AG04450 (cell line): ENCODE measurements at regions of chr5 and their contacts with region 1.

Region 1: GRCh38 chr5:179265514-179266290 is 79.6 kb downstream of the ADAMTS2 start:
- DNase-seq: peak; percentile 96
- H3K4me3 ChIP-seq: peak overlapping the region; percentile 32
- H3K27ac ChIP-seq: peak overlapping the region; percentile 99
- H3K27me3 ChIP-seq: no peaks in the 10 kb centered on the region
- CTCF ChIP-seq: no peak

Region 2: GRCh38 chr5:179275941-179276837 is 10.5 kb after region 1 on chr5:
- CTCF ChIA-PET with region 1: interaction called, 3 read pairs
- POLR2A ChIA-PET with region 1: interaction called, 15 read pairs
- DNase-seq: peak; percentile 93
- H3K4me3 ChIP-seq: no peak overlapping the region
- H3K27ac ChIP-seq: peak overlapping the region; percentile 95
- H3K27me3 ChIP-seq: no peaks in the 10 kb centered on the region
- CTCF ChIP-seq: no peak

Region 3: DNA sequence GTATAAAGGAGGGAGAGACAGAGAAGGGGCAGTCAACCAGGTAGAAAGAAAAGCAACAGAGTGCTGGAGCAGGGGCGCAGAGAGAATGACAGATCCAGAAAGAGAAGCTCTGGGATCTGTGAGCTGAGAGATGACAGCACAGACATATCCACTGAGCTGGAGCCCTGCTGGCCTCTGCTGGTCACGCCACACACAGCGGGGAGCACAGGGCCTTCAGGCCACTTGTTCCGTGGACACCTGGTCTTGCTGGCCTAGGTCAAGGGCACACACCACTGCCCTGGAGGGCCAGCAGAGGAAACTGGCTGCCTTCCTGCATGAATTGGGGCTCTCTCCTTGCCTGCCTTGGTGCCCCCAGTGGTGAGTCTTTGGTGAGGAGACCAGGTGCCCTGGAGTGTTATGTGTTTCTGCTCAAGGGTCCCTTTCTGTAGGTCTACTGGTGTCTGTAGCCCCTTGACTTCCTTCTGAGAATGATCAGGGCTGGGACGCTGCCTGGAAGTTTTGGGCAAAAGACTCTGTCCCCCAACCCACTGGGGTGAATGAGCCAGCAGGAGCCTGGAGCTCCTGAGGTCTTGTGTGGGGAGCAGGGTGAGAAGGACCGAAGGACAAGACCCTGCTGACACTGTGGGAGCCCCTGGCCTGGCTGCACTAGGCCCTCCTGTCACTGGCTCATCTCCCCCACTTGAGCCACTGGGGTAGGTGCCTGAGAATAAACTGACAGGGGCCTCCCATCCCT is 138.8 kb after region 1 on chr5:
- CTCF ChIA-PET with region 1: no interaction called
- POLR2A ChIA-PET with region 1: no interaction called
- DNase-seq: no peak
- H3K4me3 ChIP-seq: no peak overlapping the region
- H3K27ac ChIP-seq: no peak overlapping the region
- H3K27me3 ChIP-seq: no peaks in the 10 kb centered on the region
- CTCF ChIP-seq: peak; percentile 50